Calu3 (cell line): ENCODE measurements at regions of chr4 and their contacts with region 1.

Region 1: GRCh38 chr4:158809611-158810486 is 41.0 kb downstream of the FNIP2 start:
- DNase-seq: peak; percentile 38
- H3K4me3 Mint-ChIP-seq: peak overlapping the region; percentile 58
- H3K27ac Mint-ChIP-seq: peak overlapping the region; percentile 97
- H3K4me1 Mint-ChIP-seq: peaks cover 68% of the 10 kb centered on the region
- H3K27me3 Mint-ChIP-seq: no peaks in the 10 kb centered on the region
- CTCF ChIP-seq: no peak

Region 2: DNA sequence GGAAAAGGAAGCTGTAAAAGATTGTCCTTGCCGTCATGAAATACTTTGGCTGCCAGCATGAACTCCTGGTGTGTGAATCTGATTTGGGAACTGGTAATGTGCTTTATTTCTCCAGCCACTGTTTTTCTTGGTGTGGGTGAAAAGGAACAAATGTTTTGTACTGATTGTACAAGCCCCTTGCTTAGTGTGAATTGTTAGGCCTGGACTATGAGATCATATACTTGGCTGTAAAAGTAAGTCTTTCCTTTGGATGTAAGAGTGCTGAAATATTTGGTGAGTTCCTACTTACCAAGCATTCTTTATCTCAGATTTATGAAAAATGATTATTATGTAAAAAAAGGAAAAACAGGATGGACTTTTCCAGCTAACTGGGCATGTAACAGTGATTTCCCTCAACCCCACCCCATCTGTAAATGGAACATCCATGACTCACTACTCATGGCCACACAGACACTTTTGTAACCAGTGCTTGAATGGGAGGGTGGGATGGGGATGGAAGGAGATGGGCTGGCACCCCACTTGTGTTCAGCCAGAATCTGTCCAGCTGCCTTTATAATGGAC is 34.7 kb before region 1 on chr4:
- CTCF ChIA-PET with region 1: interaction called, 5 read pairs
- intact Hi-C with region 1: loop called (anchors 2 kb)
- DNase-seq: no peak
- H3K4me3 Mint-ChIP-seq: peak overlapping the region; percentile 44
- H3K27ac Mint-ChIP-seq: peak overlapping the region; percentile 91
- H3K4me1 Mint-ChIP-seq: peaks cover 40% of the 10 kb centered on the region
- H3K27me3 Mint-ChIP-seq: no peaks in the 10 kb centered on the region
- CTCF ChIP-seq: no peak

Region 3: DNA sequence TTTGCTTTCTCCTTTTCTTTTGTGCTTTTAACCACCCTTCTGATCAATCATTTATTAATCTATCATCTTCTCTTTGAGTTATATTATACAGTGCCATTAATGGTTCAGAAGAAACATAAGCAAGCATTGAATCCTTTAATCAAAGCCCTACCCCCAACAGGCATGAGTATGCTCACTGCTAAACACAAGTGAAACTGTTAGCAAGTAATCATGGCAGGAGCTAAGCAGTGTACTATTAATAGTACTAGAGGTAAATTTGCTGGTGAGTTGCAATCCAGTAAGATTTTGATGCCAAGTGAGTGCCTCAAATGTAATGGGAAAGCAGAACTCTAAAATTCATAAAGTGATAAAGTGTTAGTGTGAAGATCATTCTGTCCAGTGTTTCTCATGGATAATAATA is 16.2 kb after region 1 on chr4:
- CTCF ChIA-PET with region 1: interaction called, 10 read pairs
- intact Hi-C with region 1: loop called (anchors 1 kb)
- DNase-seq: no peak
- H3K4me3 Mint-ChIP-seq: peak overlapping the region; percentile 69
- H3K27ac Mint-ChIP-seq: peak overlapping the region; percentile 99
- H3K4me1 Mint-ChIP-seq: peaks cover 78% of the 10 kb centered on the region
- H3K27me3 Mint-ChIP-seq: no peaks in the 10 kb centered on the region
- CTCF ChIP-seq: no peak

Region 4: GRCh38 chr4:158845311-158846041 is 35.6 kb after region 1 on chr4:
- CTCF ChIA-PET with region 1: no interaction called
- intact Hi-C with region 1: loop called (anchors 5 kb)
- DNase-seq: no peak
- H3K4me3 Mint-ChIP-seq: no peak overlapping the region
- H3K27ac Mint-ChIP-seq: no peak overlapping the region
- H3K4me1 Mint-ChIP-seq: peaks cover 6% of the 10 kb centered on the region
- H3K27me3 Mint-ChIP-seq: no peaks in the 10 kb centered on the region
- CTCF ChIP-seq: no peak